Ascending aorta (tissue), 2 donors: ENCODE measurements at regions of chr19 and their contacts with region 1.

Region 1: GRCh38 chr19:33316541-33317264 is 14.4 kb upstream of the CEBPA start:
- DNase-seq: no peak
- H3K4me3 ChIP-seq: no peak overlapping the region
- H3K27ac ChIP-seq: no peak overlapping the region
- H3K4me1 ChIP-seq: no peaks in the 10 kb centered on the region
- H3K27me3 ChIP-seq: no peaks in the 10 kb centered on the region
- CTCF ChIP-seq: no peak

Region 2: GRCh38 chr19:33280351-33280921 is 36.3 kb before region 1 on chr19:
- intact Hi-C with region 1: loop called (anchors 5 kb)
- DNase-seq: no peak
- H3K4me3 ChIP-seq: no peak overlapping the region
- H3K27ac ChIP-seq: no peak overlapping the region
- H3K4me1 ChIP-seq: no peaks in the 10 kb centered on the region
- H3K27me3 ChIP-seq: no peaks in the 10 kb centered on the region
- CTCF ChIP-seq: no peak